HEK293 (cell line): ENCODE measurements at regions of chr19 and their contacts with region 1.

Region 1: GRCh38 chr19:49869441-49870176 is 2.2 kb upstream of the PNKP start:
- H3K4me3 ChIP-seq: peak overlapping the region; percentile 40
- H3K27ac ChIP-seq: peak overlapping the region; percentile 92
- H3K4me1 ChIP-seq: peaks cover 25% of the 10 kb centered on the region
- CTCF ChIP-seq: no peak

Region 2: DNA sequence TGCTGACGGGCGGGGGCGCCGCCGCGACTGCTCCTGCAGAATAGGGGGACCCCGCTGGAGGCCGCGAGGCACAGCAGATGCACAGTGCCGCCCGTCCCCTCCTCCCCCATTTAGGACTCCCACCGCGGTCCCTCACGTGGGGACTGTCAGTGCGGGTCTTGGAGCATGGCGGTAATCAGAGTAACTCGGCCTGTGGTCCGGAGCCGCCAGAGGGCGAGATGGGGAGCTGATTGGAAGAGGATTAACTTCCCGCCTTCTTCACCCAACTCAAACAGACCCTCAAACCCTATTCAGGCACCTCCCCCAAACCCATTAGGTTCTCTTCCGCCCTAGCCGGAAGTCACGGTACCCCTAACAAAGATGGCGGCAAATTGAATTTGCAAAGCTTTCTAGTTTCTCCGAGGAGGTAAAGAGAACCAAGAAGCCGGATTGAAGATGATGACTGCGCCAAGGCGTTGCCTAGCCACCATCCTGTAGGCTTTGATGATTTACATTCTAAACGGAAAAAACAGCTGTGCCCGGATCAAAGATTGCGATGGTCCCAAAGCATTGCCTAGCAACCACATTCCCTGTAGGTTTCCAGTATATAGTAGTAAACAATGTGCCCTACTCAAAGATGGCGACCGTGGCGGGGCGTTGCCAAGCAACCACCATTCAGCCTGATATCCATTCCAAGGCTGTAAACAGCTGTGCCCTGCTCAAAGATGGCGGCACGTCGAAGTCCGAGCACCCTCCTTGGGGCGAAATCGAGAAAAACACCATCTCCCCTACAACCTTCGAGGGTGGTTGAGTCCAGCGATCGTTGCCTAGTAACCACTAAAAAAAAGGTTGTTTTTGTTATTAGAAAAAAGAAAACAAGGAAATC is 56.4 kb before region 1 on chr19 and contains the start of gene FUZ:
- CTCF ChIA-PET with region 1: interaction called, 3 read pairs
- POLR2A ChIA-PET with region 1: interaction called, 15 read pairs
- H3K4me3 ChIP-seq: peak within 1 kb of the TSS; percentile 92
- H3K27ac ChIP-seq: peak within 1 kb of the TSS; percentile 67; the same call in 1 of the 2 replicates
- H3K4me1 ChIP-seq: peaks cover 2% of the 10 kb centered on the region; the same call in 1 of the 2 replicates
- CTCF ChIP-seq: peak; percentile 91

Region 3: GRCh38 chr19:49850473-49851342 is 18.9 kb before region 1 on chr19 and contains the start of gene PTOV1:
- CTCF ChIA-PET with region 1: interaction called, 6 read pairs
- POLR2A ChIA-PET with region 1: interaction called, 128 read pairs
- H3K4me3 ChIP-seq: peak within 1 kb of the TSS; percentile 76
- H3K27ac ChIP-seq: peak within 1 kb of the TSS; percentile 99
- H3K4me1 ChIP-seq: peaks cover 17% of the 10 kb centered on the region; the same call in 1 of the 2 replicates
- CTCF ChIP-seq: no peak

Region 4: GRCh38 chr19:49858031-49858991 is 11.3 kb before region 1 on chr19:
- CTCF ChIA-PET with region 1: interaction called, 4 read pairs
- POLR2A ChIA-PET with region 1: interaction called, 128 read pairs
- H3K4me3 ChIP-seq: no peak overlapping the region
- H3K27ac ChIP-seq: peak overlapping the region; percentile 53
- H3K4me1 ChIP-seq: peaks cover 15% of the 10 kb centered on the region
- CTCF ChIP-seq: peak; percentile 48

Region 5: DNA sequence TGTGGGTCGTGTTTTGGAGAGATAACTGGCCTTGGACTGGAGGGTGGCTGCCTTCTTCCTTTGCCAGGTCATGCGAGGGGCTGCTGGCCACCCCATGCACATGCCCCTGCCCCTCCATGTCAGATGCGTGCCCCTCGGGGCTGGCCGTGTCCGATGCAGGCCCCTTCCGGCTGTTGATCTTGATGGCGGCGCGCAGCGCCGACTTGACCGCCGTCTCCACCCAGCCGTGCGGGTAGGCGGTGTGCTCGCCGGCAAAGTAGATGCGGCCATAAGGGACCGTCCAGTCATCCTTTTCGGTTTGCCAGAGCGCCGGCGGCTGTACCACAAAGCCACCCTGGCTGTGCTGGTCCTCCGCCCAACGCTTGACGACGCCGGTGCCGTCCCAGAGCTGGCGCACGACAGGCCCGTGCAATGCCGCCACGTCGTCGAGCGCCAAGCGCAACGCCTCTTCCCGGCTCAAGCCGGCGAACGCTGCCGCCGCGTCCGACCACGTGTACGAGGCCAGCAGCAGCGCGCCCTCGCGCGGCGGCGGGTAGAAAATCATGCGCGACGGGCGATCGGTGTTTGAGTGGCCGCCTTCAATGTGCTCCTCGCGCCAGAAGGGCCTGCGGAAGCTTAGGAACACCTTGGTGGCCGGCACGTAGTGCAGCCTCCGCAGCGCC is 20.2 kb after region 1 on chr19:
- CTCF ChIA-PET with region 1: interaction called, 10 read pairs
- POLR2A ChIA-PET with region 1: interaction called, 5 read pairs
- H3K4me3 ChIP-seq: peak overlapping the region; percentile 32
- H3K27ac ChIP-seq: no peak overlapping the region
- H3K4me1 ChIP-seq: no peaks in the 10 kb centered on the region
- CTCF ChIP-seq: no peak

Region 6: DNA sequence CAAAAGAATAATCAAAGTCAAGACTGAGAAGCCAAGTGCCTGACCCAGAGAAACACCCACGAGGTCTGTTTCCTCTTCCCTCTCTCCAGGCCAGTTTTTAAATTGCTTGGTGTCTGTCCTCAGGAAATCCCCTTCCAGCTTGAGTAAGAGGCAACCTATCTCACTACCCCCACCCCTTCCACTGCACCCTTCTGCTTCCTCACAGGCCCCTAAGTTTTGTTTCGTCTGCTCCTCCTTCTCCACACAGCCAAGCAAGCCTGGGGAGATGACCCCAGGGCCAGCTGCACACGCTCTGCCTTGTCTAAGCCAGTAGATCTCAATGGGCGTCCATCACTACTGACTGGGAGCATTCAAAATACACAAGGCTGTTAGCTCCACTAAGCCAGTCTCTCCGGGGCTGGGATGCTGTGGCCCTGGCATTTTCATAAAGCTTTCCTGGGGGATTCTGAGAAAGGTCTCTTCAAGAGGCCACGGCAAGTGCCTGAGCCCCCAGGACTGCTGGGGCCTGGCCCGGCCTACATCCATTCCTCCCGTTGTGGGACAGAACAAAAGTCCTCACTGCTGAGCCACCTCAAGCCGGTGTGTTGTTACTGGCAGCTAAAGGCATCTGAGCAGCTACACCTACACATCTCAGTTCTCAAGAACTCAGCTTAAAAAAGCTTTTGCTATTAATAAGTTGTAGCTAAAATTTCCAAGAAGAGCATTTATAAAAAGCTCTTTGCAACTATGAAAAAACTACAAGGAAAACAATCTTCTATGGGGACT is 42.0 kb after region 1 on chr19:
- CTCF ChIA-PET with region 1: no interaction called
- POLR2A ChIA-PET with region 1: interaction called, 10 read pairs
- H3K4me3 ChIP-seq: no peak overlapping the region
- H3K27ac ChIP-seq: peak overlapping the region; percentile 34; the same call in 1 of the 2 replicates
- H3K4me1 ChIP-seq: no peaks in the 10 kb centered on the region
- CTCF ChIP-seq: no peak

Region 7: DNA sequence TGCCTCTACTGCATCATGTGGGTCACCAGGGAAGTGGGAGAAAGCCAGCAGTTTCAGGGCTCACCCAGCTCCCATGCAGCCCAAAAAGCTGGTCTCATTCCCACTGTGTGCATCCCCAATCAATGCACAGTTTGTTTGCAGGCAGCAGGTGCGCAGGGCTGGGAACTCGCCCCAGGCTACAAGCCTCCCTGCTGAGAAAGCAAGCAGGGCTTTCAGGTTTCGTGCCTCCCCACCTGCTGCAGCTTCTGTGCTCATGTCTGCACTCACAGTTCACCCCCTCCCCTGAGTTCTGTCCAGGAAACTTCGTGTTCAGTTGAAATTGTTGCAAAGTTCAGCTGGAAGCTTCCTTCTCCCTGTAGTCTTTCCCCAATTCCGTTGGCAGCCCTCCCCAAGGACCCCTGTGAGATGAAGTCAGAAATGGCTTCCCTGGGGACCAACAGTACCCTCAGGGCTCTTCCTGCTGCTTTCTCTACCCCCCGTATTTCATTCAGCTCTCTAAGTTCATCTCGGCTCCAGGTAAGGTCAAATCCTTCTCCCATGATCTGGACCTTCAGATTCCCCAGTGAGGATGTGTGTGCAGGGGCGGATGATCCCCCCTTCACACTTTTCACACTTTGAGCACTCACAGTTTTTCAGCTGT is 974.8 kb after region 1 on chr19:
- CTCF ChIA-PET with region 1: no interaction called
- POLR2A ChIA-PET with region 1: interaction called, 11 read pairs
- H3K4me3 ChIP-seq: no peak overlapping the region
- H3K27ac ChIP-seq: no peak overlapping the region
- H3K4me1 ChIP-seq: peaks cover 15% of the 10 kb centered on the region
- CTCF ChIP-seq: no peak